ENCODE measurements at regions of chr17 and their contacts with region 1.

Region 1: DNA sequence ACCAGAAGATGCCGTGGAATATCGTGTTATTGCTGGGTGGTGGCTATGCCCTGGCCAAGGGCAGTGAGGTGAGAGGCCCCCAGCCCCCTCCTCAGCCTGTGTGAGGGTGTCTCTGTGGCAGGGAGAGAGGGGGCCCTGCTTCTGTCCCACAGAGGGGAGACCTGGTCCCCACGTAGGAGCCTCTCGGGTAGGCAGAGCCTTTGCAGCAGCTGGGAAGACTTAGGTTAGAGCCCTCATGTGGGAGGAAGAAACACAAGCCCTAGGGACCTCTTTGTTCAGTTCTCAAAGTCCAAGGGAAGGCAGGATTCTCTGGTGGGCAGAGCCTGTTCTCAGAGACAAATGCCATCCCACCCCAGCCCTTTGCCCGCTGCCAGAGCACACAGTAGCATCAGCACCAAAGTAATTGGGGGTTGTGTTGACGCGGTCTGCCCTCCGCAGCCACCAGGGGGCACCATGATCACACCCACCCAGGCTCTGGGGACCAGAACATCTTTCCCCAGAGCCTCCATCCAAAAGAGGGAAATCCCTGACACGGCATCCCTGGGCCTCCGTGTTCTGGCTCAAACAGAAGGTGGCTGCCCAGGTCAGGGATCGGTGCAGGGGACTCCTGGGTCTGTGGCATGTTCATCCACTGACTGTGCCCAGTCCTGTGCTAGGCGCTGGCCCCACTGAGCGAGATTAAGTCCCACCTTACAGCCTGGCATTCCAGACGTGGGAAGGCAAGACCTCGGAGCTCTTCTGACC is 11.5 kb upstream of the FOXN1 start:
- DNase-seq: peak; percentile 44
- H3K4me3 ChIP-seq: no peak overlapping the region
- H3K27ac ChIP-seq: no peak overlapping the region
- H3K4me1 ChIP-seq: no peaks in the 10 kb centered on the region
- H3K27me3 ChIP-seq: no peaks in the 10 kb centered on the region
- CTCF ChIP-seq: peak; percentile 84 to 95
- POLR2A ChIP-seq: no peak

Region 2: DNA sequence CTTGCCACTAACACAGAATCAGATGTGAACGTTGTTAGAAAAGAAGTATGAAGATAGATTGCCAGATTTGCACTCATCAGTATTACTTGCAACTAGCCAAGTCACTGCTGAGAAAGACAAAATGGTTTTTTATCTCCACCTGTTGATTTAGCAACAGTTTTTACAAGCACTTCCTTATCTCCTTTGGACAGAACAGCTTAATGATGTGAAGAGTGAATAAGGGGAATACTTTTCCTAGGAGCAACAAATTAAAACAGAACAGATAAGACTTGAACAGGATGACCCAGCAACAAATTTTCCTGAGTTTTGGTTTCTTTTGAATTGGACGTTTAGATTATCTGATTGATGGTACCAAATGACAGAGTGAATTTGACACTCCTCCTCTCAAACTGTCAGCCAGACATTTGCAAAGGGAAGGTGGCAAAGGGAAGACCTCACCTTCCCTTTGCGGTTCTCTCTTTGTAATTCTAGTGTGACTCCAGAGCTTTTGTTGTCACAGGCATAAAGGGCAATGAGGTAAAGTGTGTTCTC is 321.5 kb before region 1 on chr17:
- CTCF ChIA-PET with region 1: no interaction called
- POLR2A ChIA-PET with region 1: no interaction called
- dilution Hi-C with region 1: no loop called
- intact Hi-C with region 1: no loop called
- DNase-seq: peak; percentile 76
- H3K4me3 ChIP-seq: no peak overlapping the region
- H3K27ac ChIP-seq: peak overlapping the region; percentile 79
- H3K4me1 ChIP-seq: peaks cover 45% of the 10 kb centered on the region
- H3K27me3 ChIP-seq: no peaks in the 10 kb centered on the region
- CTCF ChIP-seq: no peak
- POLR2A ChIP-seq: no peak

Region 3: DNA sequence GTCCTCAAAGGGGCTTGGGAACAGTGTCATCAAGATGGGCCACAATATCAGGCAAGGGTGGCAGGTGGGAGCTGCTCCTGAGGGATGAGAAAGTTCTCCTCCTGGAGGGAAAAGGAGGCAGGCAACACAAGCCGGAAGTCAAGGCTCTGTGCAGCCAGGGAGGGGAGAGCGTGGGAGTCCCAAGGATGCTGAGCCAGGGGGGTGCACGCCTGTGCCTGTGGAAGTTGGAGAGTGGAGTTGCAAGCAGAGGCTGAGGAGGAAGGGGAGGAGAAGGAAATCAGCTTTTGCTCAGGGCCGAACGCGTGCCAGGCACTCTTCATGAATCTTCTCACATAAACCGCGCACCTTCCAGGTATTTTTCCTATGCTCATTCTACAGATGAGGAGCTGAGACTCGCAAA is 28.6 kb before region 1 on chr17:
- CTCF ChIA-PET with region 1: no interaction called
- POLR2A ChIA-PET with region 1: no interaction called
- dilution Hi-C with region 1: no loop called
- intact Hi-C with region 1: no loop called
- DNase-seq: no peak
- H3K4me3 ChIP-seq: no peak overlapping the region
- H3K27ac ChIP-seq: no peak overlapping the region
- H3K4me1 ChIP-seq: no peaks in the 10 kb centered on the region
- H3K27me3 ChIP-seq: peaks cover 5 to 6% of the 10 kb centered on the region in 2 experiments
- CTCF ChIP-seq: no peak
- POLR2A ChIP-seq: no peak

Region 4: GRCh38 chr17:28540231-28540630 is 45.6 kb after region 1 on chr17:
- CTCF ChIA-PET with region 1: interaction called, 15 read pairs
- POLR2A ChIA-PET with region 1: no interaction called
- dilution Hi-C with region 1: no loop called
- intact Hi-C with region 1: loop called (anchors 1 kb)
- DNase-seq: no peak
- H3K4me3 ChIP-seq: no peak overlapping the region
- H3K27ac ChIP-seq: no peak overlapping the region
- H3K4me1 ChIP-seq: no peaks in the 10 kb centered on the region
- H3K27me3 ChIP-seq: peaks cover 0 to 2% of the 10 kb centered on the region in 2 experiments
- CTCF ChIP-seq: no peak
- POLR2A ChIP-seq: no peak